ENCODE measurements at regions of chr13 and their contacts with region 1.

Region 1: GRCh38 chr13:40666045-40666904 is at the start of gene FOXO1:
- DNase-seq: peak; percentile 91 to 96 (median 94)
- H3K4me3 ChIP-seq: peak within 1 kb of the TSS; percentile 78
- H3K27ac ChIP-seq: peak within 1 kb of the TSS; percentile 88 to 99
- H3K4me1 ChIP-seq: peaks cover 7% of the 10 kb centered on the region
- H3K27me3 ChIP-seq: no peaks in the 10 kb centered on the region
- CTCF ChIP-seq: no peak
- EP300 ChIP-seq: no peak
- POLR2A ChIP-seq: peak; percentile 92
- total RNA-seq, gene FOXO1: 95.9 to 157 (median 117) TPM

Region 2: GRCh38 chr13:39815345-39816111 is 850.7 kb before region 1 on chr13:
- intact Hi-C with region 1: loop called in 1 of 4 experiments (anchors 5 kb)
- DNase-seq: peak; percentile 42 to 60 (median 54)
- H3K4me3 ChIP-seq: no peak overlapping the region
- H3K27ac ChIP-seq: peak overlapping the region in 1 of 2 donors; percentile 80
- H3K4me1 ChIP-seq: peaks cover 15% of the 10 kb centered on the region
- H3K27me3 ChIP-seq: no peaks in the 10 kb centered on the region
- CTCF ChIP-seq: peak in 2 of 3 donors; percentile 18 to 31
- EP300 ChIP-seq: no peak
- POLR2A ChIP-seq: no peak

Region 3: DNA sequence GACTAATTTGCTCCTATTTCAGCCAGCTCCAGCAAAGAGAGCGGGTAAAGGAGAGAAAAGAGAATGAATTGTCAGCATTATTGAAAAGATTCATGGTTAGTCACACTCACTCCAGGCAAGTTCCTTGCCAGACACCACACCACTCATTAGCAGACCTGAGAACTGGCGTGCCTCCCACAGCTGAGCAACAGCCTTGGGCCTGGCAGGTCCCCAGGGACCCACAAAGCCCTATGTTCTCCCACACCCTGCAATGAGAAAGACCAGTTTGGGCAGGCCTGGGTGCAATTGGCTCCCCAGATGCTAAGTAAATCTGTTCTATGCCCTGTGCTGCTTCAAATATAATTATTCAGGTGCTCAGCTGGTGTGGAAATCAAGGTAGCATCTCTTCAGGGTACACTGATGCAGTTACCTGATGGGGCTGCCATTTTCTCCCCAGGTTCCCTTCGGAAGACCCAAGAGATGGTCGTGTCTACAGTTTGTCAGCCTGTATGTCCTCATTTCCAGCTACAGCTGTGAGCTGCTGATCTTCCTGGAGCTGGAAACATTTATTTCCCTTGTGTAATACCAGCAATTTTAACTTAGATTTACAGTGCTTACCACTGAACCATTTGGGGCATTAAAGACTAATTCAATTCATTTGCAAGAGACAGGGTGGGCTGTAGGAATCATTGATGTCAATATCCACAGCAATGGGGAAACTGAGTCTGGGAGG is 605.8 kb before region 1 on chr13:
- intact Hi-C with region 1: loop called in 1 of 4 experiments (anchors 5 kb)
- DNase-seq: peak; percentile 78 to 88 (median 83)
- H3K4me3 ChIP-seq: no peak overlapping the region
- H3K27ac ChIP-seq: peak overlapping the region in 1 of 2 donors; percentile 11
- H3K4me1 ChIP-seq: peaks cover 10% of the 10 kb centered on the region
- H3K27me3 ChIP-seq: no peaks in the 10 kb centered on the region
- CTCF ChIP-seq: no peak
- EP300 ChIP-seq: no peak
- POLR2A ChIP-seq: no peak

Region 4: GRCh38 chr13:40230833-40231266 is 435.4 kb before region 1 on chr13:
- intact Hi-C with region 1: loop called in 1 of 4 experiments (anchors 10 kb)
- DNase-seq: no peak
- H3K4me3 ChIP-seq: no peak overlapping the region
- H3K27ac ChIP-seq: peak overlapping the region in 1 of 2 donors; percentile 14
- H3K4me1 ChIP-seq: peaks cover 2% of the 10 kb centered on the region
- H3K27me3 ChIP-seq: no peaks in the 10 kb centered on the region
- CTCF ChIP-seq: no peak
- EP300 ChIP-seq: no peak
- POLR2A ChIP-seq: no peak

Region 5: DNA sequence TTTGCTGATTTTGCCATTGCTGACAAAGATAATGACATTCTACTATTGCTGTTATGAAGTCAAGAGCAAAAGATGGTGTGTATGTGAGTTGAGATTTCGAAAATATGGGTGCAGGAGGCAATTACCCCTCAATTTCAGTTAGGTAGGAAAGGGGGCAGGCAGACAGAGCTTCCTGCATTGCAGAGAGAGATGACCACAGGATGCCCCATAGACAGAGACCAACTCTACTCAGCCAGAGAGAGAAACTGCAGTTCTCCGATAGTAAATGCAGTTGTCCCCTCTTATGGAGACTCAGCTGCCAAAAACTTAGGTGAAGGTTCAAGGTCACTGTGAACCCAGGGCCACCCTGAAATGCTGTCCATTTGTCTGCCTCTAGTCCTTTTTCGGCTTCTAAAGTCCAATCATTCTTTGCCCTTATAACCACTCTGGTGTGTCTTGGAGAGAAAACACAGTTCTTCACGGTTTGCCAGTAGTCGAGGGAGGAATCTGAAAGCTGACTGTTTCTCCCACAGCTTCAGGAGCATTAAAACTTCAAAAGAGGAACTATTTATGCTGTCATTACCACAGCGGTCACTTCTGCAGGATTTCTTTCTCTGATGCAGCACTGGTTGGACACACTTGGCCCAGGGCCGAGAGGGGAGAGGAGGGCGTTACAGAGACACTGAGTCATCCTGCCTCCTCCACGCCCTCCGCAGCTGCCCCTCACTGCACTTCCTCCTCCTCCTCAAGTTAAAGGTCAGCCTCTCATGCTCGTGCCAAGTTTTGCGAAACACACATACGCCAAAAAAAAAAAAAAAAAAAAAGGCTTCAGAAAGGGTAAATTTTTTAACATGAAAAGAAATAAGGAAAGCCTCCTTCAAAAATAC is 264.1 kb before region 1 on chr13:
- intact Hi-C with region 1: loop called in 2 of 4 experiments (anchors 10 kb)
- DNase-seq: peak; percentile 95 to 99 (median 98)
- H3K4me3 ChIP-seq: no peak overlapping the region
- H3K27ac ChIP-seq: peak overlapping the region in 1 of 2 donors; percentile 75
- H3K4me1 ChIP-seq: peaks cover 13% of the 10 kb centered on the region
- H3K27me3 ChIP-seq: no peaks in the 10 kb centered on the region
- CTCF ChIP-seq: no peak
- EP300 ChIP-seq: no peak
- POLR2A ChIP-seq: no peak

Region 6: GRCh38 chr13:40558656-40559055 is 107.6 kb before region 1 on chr13:
- intact Hi-C with region 1: no loop called
- DNase-seq: no peak
- H3K4me3 ChIP-seq: no peak overlapping the region
- H3K27ac ChIP-seq: no peak overlapping the region
- H3K4me1 ChIP-seq: peaks cover 23% of the 10 kb centered on the region
- H3K27me3 ChIP-seq: no peaks in the 10 kb centered on the region
- CTCF ChIP-seq: no peak
- EP300 ChIP-seq: no peak
- POLR2A ChIP-seq: no peak

Region 7: DNA sequence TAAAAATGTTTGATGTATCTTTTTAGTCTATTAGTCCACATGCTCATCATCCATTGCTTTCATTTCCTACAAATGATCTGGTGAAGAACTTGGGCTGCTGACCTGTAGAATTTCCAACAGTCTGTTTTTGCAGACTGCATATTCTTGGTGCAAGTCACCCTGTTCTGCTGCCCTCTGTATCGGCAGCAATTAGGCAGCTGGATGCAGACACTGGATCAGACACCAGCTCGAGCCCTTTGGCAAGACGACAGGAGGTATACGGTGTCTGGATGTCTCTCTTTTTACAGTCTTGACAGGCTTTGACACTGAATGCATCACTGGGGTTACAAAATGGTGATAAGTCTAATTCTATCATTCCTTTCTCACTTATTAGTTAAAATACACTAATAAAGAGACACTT is 575.4 kb after region 1 on chr13:
- intact Hi-C with region 1: no loop called
- DNase-seq: no peak
- H3K4me3 ChIP-seq: no peak overlapping the region
- H3K27ac ChIP-seq: no peak overlapping the region
- H3K4me1 ChIP-seq: no peaks in the 10 kb centered on the region
- H3K27me3 ChIP-seq: no peaks in the 10 kb centered on the region
- CTCF ChIP-seq: no peak
- EP300 ChIP-seq: no peak
- POLR2A ChIP-seq: no peak